IMR-90 (cell line): ENCODE measurements at regions of chr18 and their contacts with region 1.

Region 1: GRCh38 chr18:74097598-74098202 is 49.9 kb downstream of the FBXO15 start:
- DNase-seq: no peak
- ATAC-seq: no peak
- H3K4me3 ChIP-seq: no peak overlapping the region
- H3K27ac ChIP-seq: no peak overlapping the region
- H3K4me1 ChIP-seq: no peaks in the 10 kb centered on the region
- H3K27me3 ChIP-seq: 0 out of 2 replicates have a peak, but pooled peaks cover 1% of the 10 kb centered on the region
- CTCF ChIP-seq: no peak
- POLR2A ChIP-seq: no peak
- RAD21 ChIP-seq: no peak

Region 2: GRCh38 chr18:73990258-73990657 is 107.4 kb before region 1 on chr18:
- CTCF ChIA-PET with region 1: no interaction called
- POLR2A ChIA-PET with region 1: no interaction called
- dilution Hi-C with region 1: no loop called
- in situ Hi-C with region 1: no loop called
- intact Hi-C with region 1: no loop called
- DNase-seq: no peak
- ATAC-seq: no peak
- H3K4me3 ChIP-seq: no peak overlapping the region
- H3K27ac ChIP-seq: no peak overlapping the region
- H3K4me1 ChIP-seq: no peaks in the 10 kb centered on the region; the same call in 1 of the 2 replicates
- H3K27me3 ChIP-seq: no peaks in the 10 kb centered on the region
- CTCF ChIP-seq: no peak
- POLR2A ChIP-seq: no peak
- RAD21 ChIP-seq: no peak

Region 3: GRCh38 chr18:74081966-74082741 is 15.5 kb before region 1 on chr18:
- CTCF ChIA-PET with region 1: interaction called, 14 read pairs
- POLR2A ChIA-PET with region 1: no interaction called
- dilution Hi-C with region 1: no loop called
- in situ Hi-C with region 1: no loop called
- intact Hi-C with region 1: no loop called
- DNase-seq: peak; percentile 63
- ATAC-seq: peak; percentile 99
- H3K4me3 ChIP-seq: no peak overlapping the region
- H3K27ac ChIP-seq: no peak overlapping the region
- H3K4me1 ChIP-seq: peaks cover 7% of the 10 kb centered on the region
- H3K27me3 ChIP-seq: peaks cover 14% of the 10 kb centered on the region
- CTCF ChIP-seq: peak; percentile 73
- POLR2A ChIP-seq: no peak
- RAD21 ChIP-seq: peak; percentile 62

Region 4: GRCh38 chr18:74731097-74731496 is 633.4 kb after region 1 on chr18:
- CTCF ChIA-PET with region 1: no interaction called
- POLR2A ChIA-PET with region 1: no interaction called
- dilution Hi-C with region 1: no loop called
- in situ Hi-C with region 1: no loop called
- intact Hi-C with region 1: no loop called
- DNase-seq: peak; percentile 86
- ATAC-seq: peak; percentile 92
- H3K4me3 ChIP-seq: no peak overlapping the region
- H3K27ac ChIP-seq: peak overlapping the region; percentile 19; the same call in 1 of the 2 replicates
- H3K4me1 ChIP-seq: peaks cover 3% of the 10 kb centered on the region
- H3K27me3 ChIP-seq: no peaks in the 10 kb centered on the region
- CTCF ChIP-seq: no peak
- POLR2A ChIP-seq: no peak
- RAD21 ChIP-seq: no peak